ENCODE measurements at regions of chr5 and their contacts with region 1.

Region 1: DNA sequence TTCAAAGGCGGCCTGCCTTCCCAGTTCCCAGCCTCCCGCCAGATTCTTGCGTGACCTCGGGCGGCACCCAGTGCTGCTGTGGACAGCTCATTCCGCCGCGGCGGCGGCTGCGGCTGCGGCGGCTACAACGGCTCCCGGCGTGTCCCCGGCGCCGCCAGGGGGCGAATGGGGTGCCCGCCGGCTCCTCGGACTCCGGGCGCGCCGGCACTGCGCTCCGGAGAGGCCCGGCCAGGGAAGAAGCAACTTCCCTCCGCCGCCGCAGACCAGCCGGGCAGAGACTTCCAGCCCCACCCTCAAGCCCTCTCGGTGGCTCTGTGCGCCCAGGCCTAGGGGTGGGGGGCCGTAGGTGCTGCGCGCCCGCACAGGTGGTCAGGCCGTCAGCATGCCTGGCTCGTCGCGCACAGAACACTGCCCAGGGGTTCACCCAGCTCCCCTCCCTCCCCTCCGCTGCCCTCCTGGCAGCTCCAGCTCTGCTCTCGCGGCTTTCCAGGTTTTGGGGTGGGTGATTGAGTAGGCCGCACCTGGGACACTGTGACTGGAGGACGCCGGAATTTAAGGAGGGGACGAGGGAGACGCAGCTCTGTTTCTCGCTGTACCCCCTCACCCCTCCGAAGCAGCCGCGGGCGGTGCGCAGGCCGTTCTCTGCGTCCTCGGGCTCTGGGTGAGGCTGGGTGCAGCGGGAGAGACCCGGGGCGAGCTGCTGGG is 20.2 kb downstream of the IGIP start:
- DNase-seq: no peak
- ATAC-seq: peak; percentile 91
- H3K4me3 ChIP-seq: peak overlapping the region; percentile 23; the same call in 1 of the 2 replicates
- H3K27ac ChIP-seq: no peak overlapping the region
- H3K4me1 ChIP-seq: peaks cover 6% of the 10 kb centered on the region; the same call in 1 of the 2 replicates
- H3K27me3 ChIP-seq: peaks cover 6% of the 10 kb centered on the region in 2 experiments; a peak in 3 of 4 replicates
- CTCF ChIP-seq: peak; percentile 51 to 58 (median 57); a peak in 5 of 6 replicates
- EP300 ChIP-seq: no peak
- POLR2A ChIP-seq: no peak
- RAD21 ChIP-seq: 0 out of 2 replicates have a peak, but pooled peaks have one; percentile 6

Region 2: GRCh38 chr5:140084541-140084940 is 61.4 kb before region 1 on chr5:
- CTCF ChIA-PET with region 1: interaction called, 30 read pairs
- POLR2A ChIA-PET with region 1: no interaction called
- RAD21 ChIA-PET with region 1: interaction called, 4 read pairs
- SMC1A ChIA-PET with region 1: interaction called, 5 read pairs
- in situ Hi-C with region 1: loop called (anchors 5 kb)
- intact Hi-C with region 1: no loop called
- DNase-seq: no peak
- ATAC-seq: peak; percentile 19; the same call in 1 of the 3 replicates
- H3K4me3 ChIP-seq: no peak overlapping the region
- H3K27ac ChIP-seq: no peak overlapping the region
- H3K4me1 ChIP-seq: no peaks in the 10 kb centered on the region
- H3K27me3 ChIP-seq: peaks cover 0 to 7% of the 10 kb centered on the region in 2 experiments
- CTCF ChIP-seq: no peak
- EP300 ChIP-seq: no peak
- POLR2A ChIP-seq: no peak
- RAD21 ChIP-seq: no peak

Region 3: GRCh38 chr5:140107312-140108083 is 38.5 kb before region 1 on chr5:
- CTCF ChIA-PET with region 1: interaction called, 31 read pairs
- POLR2A ChIA-PET with region 1: interaction called, 4 read pairs
- RAD21 ChIA-PET with region 1: interaction called, 12 read pairs
- SMC1A ChIA-PET with region 1: interaction called, 16 read pairs
- in situ Hi-C with region 1: no loop called
- intact Hi-C with region 1: no loop called
- DNase-seq: peak; percentile 68
- ATAC-seq: peak; percentile 89
- H3K4me3 ChIP-seq: peak overlapping the region; percentile 86
- H3K27ac ChIP-seq: peak overlapping the region; percentile 67
- H3K4me1 ChIP-seq: peaks cover 20% of the 10 kb centered on the region
- H3K27me3 ChIP-seq: no peaks in the 10 kb centered on the region
- CTCF ChIP-seq: peak; percentile 6 to 29 (median 27); a peak in 3 of 6 replicates
- EP300 ChIP-seq: no peak
- POLR2A ChIP-seq: peak; percentile 86
- RAD21 ChIP-seq: no peak

Region 4: GRCh38 chr5:140113699-140114263 is 32.2 kb before region 1 on chr5 and contains the start of gene PURA:
- CTCF ChIA-PET with region 1: interaction called, 30 read pairs
- POLR2A ChIA-PET with region 1: no interaction called
- RAD21 ChIA-PET with region 1: interaction called, 12 read pairs
- SMC1A ChIA-PET with region 1: interaction called, 15 read pairs
- in situ Hi-C with region 1: no loop called
- intact Hi-C with region 1: loop called (anchors 2 kb)
- DNase-seq: peak; percentile 82
- ATAC-seq: peak; percentile 85
- H3K4me3 ChIP-seq: peak within 1 kb of the TSS; percentile 93
- H3K27ac ChIP-seq: peak within 1 kb of the TSS; percentile 83
- H3K4me1 ChIP-seq: peaks cover 19% of the 10 kb centered on the region
- H3K27me3 ChIP-seq: no peaks in the 10 kb centered on the region
- CTCF ChIP-seq: peak in 2 of 3 experiments; percentile 14 to 23; a peak in 2 of 6 replicates
- EP300 ChIP-seq: no peak
- POLR2A ChIP-seq: peak; percentile 86
- RAD21 ChIP-seq: no peak; the same call in 1 of the 2 replicates
- polyA plus RNA-seq, gene PURA: 3.7 to 4.1 TPM

Region 5: GRCh38 chr5:140126315-140127012 is 19.5 kb before region 1 on chr5:
- CTCF ChIA-PET with region 1: interaction called, 70 read pairs
- POLR2A ChIA-PET with region 1: interaction called, 3 read pairs
- RAD21 ChIA-PET with region 1: interaction called, 16 read pairs
- SMC1A ChIA-PET with region 1: interaction called, 5 read pairs
- in situ Hi-C with region 1: no loop called
- intact Hi-C with region 1: no loop called
- DNase-seq: no peak
- ATAC-seq: no peak
- H3K4me3 ChIP-seq: no peak overlapping the region
- H3K27ac ChIP-seq: no peak overlapping the region
- H3K4me1 ChIP-seq: peaks cover 4% of the 10 kb centered on the region
- H3K27me3 ChIP-seq: no peaks in the 10 kb centered on the region
- CTCF ChIP-seq: no peak
- EP300 ChIP-seq: no peak
- POLR2A ChIP-seq: no peak
- RAD21 ChIP-seq: no peak

Region 6: DNA sequence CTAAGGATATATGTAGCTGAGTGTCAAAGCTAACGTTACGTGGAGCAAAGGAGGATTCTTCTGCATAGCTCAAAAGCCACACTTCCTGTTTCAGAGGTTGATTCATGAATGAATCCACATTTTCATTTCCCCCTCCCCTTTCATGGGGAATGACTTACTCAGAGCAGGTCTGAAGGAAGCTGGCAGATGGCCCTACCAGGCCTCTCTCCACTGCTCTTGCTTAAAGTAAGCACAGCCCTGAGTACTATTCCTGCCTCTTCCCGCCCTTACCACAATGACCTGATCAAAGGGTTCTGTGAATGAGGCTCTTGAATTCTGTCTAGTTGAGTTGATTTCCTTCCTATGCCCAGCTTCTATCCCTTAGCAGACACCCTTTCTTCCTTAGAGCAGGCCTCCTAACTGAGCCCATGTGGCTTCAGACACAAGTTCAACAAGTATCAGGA is 14.0 kb before region 1 on chr5:
- CTCF ChIA-PET with region 1: interaction called, 33 read pairs
- POLR2A ChIA-PET with region 1: interaction called, 3 read pairs
- RAD21 ChIA-PET with region 1: interaction called, 16 read pairs
- SMC1A ChIA-PET with region 1: interaction called, 5 read pairs
- in situ Hi-C with region 1: no loop called
- intact Hi-C with region 1: no loop called
- DNase-seq: no peak
- ATAC-seq: peak; percentile 60
- H3K4me3 ChIP-seq: no peak overlapping the region
- H3K27ac ChIP-seq: no peak overlapping the region
- H3K4me1 ChIP-seq: peaks cover 8% of the 10 kb centered on the region; the same call in 1 of the 2 replicates
- H3K27me3 ChIP-seq: no peaks in the 10 kb centered on the region
- CTCF ChIP-seq: no peak
- EP300 ChIP-seq: no peak
- POLR2A ChIP-seq: no peak
- RAD21 ChIP-seq: no peak

Region 7: DNA sequence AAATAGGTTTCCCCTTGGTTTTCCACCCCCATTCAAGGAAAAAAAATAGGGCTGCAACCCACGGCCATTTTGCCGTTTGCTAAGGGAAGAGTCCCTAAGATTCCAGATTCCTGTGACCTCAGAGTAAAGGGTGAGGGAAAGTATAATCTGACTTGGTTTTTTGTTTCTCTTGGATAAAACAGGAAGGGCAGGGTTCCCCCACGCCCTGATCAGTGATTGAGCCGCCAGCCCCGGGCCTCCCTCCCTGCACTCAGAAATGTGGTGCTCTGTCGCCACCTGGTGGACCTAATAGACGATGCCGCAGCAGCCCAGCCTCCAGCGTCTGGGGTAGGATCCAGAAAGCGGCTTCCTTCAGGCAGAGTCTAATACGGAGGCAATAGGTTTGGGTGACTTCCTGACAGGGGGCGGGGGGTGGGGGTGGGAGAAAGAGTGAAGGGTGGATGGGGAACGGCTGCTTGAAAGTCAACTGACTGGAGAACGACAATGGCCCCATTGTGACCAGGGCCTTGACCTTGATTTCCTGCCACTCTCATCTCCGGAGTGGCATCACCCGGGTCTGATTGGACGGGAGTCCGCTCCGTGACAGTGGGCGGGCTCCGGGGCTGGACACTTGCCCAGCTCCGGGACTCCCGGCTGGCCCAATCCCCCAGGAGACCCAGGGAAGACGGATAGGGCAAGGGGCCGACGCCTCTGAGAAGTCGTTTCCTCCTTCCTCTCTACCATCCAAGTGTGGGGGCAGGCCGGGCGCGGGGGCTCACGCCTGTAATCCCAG is 11.2 kb after region 1 on chr5:
- CTCF ChIA-PET with region 1: interaction called, 58 read pairs
- POLR2A ChIA-PET with region 1: interaction called, 3 read pairs
- RAD21 ChIA-PET with region 1: interaction called, 4 read pairs
- SMC1A ChIA-PET with region 1: interaction called, 9 read pairs
- in situ Hi-C with region 1: no loop called
- intact Hi-C with region 1: no loop called
- DNase-seq: peak; percentile 33
- ATAC-seq: peak; percentile 99
- H3K4me3 ChIP-seq: peak overlapping the region; percentile 41; the same call in 1 of the 2 replicates
- H3K27ac ChIP-seq: peak overlapping the region; percentile 24; the same call in 1 of the 2 replicates
- H3K4me1 ChIP-seq: peaks cover 4% of the 10 kb centered on the region
- H3K27me3 ChIP-seq: no peaks in the 10 kb centered on the region; a peak in 1 of 4 replicates
- CTCF ChIP-seq: peak; percentile 88 to 95 (median 94)
- EP300 ChIP-seq: no peak
- POLR2A ChIP-seq: no peak
- RAD21 ChIP-seq: peak; percentile 96

Region 8: DNA sequence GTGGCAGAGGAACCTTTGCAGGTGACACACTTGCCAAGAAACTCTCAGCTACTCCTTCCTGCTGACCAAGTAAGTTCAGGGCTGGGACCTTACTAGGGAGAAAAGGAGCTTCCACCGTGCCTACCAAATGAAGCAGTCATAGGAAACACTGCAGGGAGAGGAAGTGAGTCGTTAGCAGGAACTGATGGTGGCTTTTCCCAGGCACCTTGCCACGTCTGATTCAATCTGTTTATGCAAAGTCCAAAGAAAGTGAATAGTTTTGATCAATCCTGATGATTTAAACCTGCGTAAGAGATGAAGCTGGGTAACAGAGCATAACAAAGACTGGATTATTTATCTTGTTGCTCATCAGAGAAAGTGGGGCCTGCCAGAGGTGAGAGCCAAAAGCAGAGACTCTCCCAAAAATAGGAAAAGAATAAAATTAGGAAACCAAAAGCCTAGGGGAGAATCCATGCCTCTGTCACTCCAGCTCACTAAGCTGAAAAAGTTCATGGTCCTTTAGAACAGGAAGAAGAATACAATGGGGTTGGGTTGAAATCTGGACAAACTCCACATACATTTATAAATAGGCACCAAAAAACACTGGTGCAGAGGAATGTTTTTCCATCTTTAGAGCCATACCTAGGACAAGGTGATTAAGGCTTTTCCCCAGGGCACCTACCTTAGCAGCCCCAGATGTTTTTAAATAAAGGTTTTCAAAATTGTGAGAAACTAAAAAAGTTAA is 166.3 kb after region 1 on chr5:
- CTCF ChIA-PET with region 1: no interaction called
- POLR2A ChIA-PET with region 1: no interaction called
- RAD21 ChIA-PET with region 1: no interaction called
- SMC1A ChIA-PET with region 1: no interaction called
- in situ Hi-C with region 1: no loop called
- intact Hi-C with region 1: no loop called
- DNase-seq: no peak
- ATAC-seq: no peak
- H3K4me3 ChIP-seq: no peak overlapping the region
- H3K27ac ChIP-seq: no peak overlapping the region
- H3K4me1 ChIP-seq: no peaks in the 10 kb centered on the region
- H3K27me3 ChIP-seq: no peaks in the 10 kb centered on the region
- CTCF ChIP-seq: no peak
- EP300 ChIP-seq: no peak
- POLR2A ChIP-seq: no peak
- RAD21 ChIP-seq: no peak

Measured in GM12878 (cell line).